ENCODE measurements at regions of chr11 and their contacts with region 1.

Region 1: DNA sequence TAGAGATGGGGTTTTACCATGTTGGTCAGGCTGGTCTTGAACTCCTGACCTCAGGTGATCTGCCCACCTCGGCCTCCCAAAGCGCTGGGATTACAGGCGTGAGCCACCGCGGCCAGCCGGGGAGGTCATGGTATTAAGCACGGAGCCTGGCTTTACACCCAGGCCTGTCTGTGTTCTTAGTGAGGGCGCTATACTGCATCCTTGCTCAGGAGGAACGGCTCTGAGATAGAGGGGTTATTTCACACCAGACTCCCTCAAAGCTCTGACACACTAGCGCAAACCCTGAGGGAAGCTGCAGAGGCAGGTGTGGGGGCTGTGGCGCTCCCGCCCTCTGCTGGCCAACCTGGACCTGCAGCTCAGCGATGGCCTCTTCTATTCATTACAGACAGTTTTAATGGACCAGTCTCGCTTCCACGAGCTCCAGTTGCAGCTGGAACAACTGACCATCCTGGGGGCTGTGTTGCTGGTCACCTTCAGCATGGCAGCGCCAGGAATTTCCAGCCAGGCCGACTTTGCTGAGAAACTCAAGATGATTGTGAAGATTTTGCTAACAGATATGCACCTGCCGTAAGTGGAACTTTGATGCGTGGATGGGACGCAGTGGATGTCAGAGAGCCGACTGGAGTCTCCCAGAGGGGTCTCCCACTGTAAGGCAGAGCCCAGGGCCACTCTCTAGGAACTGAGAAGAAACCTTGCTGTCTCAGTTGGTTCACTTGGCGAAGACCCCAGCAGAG is 26.2 kb downstream of the TCP11L1 start:
- DNase-seq: peak; percentile 64 to 77 (median 69)
- ATAC-seq: peak; percentile 98
- H3K4me3 ChIP-seq: no peak overlapping the region
- H3K27ac ChIP-seq: no peak overlapping the region
- H3K4me1 ChIP-seq: no peaks in the 10 kb centered on the region; a peak in 1 of 5 replicates
- H3K27me3 ChIP-seq: no peaks in the 10 kb centered on the region
- CTCF ChIP-seq: peak; percentile 90 to 93 (median 92)
- EP300 ChIP-seq: no peak
- POLR2A ChIP-seq: no peak
- RAD21 ChIP-seq: peak; percentile 82 to 96

Region 2: DNA sequence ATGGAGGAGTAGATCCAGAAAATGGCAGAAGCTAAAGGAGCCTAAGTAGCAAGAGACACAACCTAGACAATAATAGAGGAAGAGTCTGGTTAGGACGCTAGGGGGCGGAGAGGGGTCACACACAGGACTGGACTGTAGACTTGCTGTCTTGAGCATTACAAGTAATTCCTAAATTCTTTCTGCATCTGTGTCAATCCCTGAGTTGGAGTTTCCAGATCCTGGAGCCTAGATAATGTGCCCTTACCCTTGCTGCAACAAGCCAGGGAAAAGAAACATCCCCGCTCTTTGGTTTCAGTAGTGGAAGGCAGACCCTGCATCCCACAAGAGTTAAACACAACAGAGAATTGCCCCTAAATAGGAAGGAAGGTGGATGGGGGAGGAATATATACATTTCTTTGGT is 256.3 kb before region 1 on chr11:
- CTCF ChIA-PET with region 1: interaction called, 3 read pairs
- POLR2A ChIA-PET with region 1: no interaction called
- in situ Hi-C with region 1: no loop called
- intact Hi-C with region 1: loop called (anchors 1 kb)
- DNase-seq: peak; percentile 36 to 73 (median 50)
- ATAC-seq: peak; percentile 99
- H3K4me3 ChIP-seq: no peak overlapping the region
- H3K27ac ChIP-seq: no peak overlapping the region
- H3K4me1 ChIP-seq: no peaks in the 10 kb centered on the region
- H3K27me3 ChIP-seq: peaks cover 0 to 10% of the 10 kb centered on the region in 2 experiments; a peak in 2 of 5 replicates
- CTCF ChIP-seq: peak; percentile 74 to 81 (median 75)
- EP300 ChIP-seq: no peak
- POLR2A ChIP-seq: no peak
- RAD21 ChIP-seq: peak; percentile 39 to 78

Region 3: DNA sequence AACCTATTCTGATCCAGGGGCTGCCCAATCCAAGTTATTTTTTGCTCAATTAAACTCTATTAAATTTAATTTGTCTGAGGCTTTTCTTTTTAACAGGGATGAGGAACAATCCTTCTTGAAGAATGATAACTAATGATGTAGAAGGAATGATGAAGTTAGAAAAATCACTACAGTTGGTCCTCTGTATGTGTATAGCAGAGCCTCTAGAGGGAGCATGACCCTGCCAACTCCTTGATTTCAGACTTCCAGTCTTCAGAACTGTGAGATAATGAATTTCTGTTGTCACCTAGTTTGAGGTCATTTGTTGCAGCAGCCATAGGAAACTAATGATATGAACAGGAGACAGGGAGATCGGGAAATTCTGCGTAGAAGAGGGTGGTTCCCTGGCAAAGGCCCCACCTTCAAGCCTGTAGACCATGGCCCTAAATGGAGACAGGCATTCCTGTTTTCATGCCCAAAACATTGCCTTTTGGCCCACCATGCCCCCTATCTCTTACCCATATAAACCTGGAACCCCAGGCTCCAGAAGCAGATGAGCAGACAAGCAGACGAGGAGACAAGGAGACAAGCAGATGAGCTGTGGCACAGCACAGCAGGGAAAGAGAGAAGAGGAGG is 180.7 kb before region 1 on chr11:
- CTCF ChIA-PET with region 1: interaction called, 7 read pairs
- POLR2A ChIA-PET with region 1: no interaction called
- in situ Hi-C with region 1: no loop called
- intact Hi-C with region 1: loop called (anchors 5 kb)
- DNase-seq: peak in 3 of 4 experiments; percentile 23 to 38 (median 29)
- ATAC-seq: peak; percentile 90
- H3K4me3 ChIP-seq: no peak overlapping the region
- H3K27ac ChIP-seq: no peak overlapping the region
- H3K4me1 ChIP-seq: no peaks in the 10 kb centered on the region
- H3K27me3 ChIP-seq: peaks cover 0 to 6% of the 10 kb centered on the region in 2 experiments; a peak in 2 of 5 replicates
- CTCF ChIP-seq: peak; percentile 21 to 68 (median 56); a peak in 5 of 6 replicates
- EP300 ChIP-seq: no peak
- POLR2A ChIP-seq: no peak
- RAD21 ChIP-seq: peak in 1 of 2 experiments; percentile 60; a peak in 3 of 4 replicates

Region 4: GRCh38 chr11:32947978-32948377 is 117.6 kb before region 1 on chr11:
- CTCF ChIA-PET with region 1: no interaction called
- POLR2A ChIA-PET with region 1: no interaction called
- in situ Hi-C with region 1: no loop called
- intact Hi-C with region 1: no loop called
- DNase-seq: no peak
- ATAC-seq: no peak
- H3K4me3 ChIP-seq: no peak overlapping the region
- H3K27ac ChIP-seq: no peak overlapping the region
- H3K4me1 ChIP-seq: no peaks in the 10 kb centered on the region
- H3K27me3 ChIP-seq: no peaks in the 10 kb centered on the region
- CTCF ChIP-seq: no peak
- EP300 ChIP-seq: no peak
- POLR2A ChIP-seq: no peak
- RAD21 ChIP-seq: no peak

Region 5: GRCh38 chr11:32972781-32973180 is 92.8 kb before region 1 on chr11:
- CTCF ChIA-PET with region 1: no interaction called
- POLR2A ChIA-PET with region 1: no interaction called
- in situ Hi-C with region 1: no loop called
- intact Hi-C with region 1: no loop called
- DNase-seq: no peak
- ATAC-seq: no peak
- H3K4me3 ChIP-seq: no peak overlapping the region
- H3K27ac ChIP-seq: no peak overlapping the region
- H3K4me1 ChIP-seq: no peaks in the 10 kb centered on the region
- H3K27me3 ChIP-seq: no peaks in the 10 kb centered on the region
- CTCF ChIP-seq: no peak
- EP300 ChIP-seq: no peak
- POLR2A ChIP-seq: no peak
- RAD21 ChIP-seq: no peak

Region 6: DNA sequence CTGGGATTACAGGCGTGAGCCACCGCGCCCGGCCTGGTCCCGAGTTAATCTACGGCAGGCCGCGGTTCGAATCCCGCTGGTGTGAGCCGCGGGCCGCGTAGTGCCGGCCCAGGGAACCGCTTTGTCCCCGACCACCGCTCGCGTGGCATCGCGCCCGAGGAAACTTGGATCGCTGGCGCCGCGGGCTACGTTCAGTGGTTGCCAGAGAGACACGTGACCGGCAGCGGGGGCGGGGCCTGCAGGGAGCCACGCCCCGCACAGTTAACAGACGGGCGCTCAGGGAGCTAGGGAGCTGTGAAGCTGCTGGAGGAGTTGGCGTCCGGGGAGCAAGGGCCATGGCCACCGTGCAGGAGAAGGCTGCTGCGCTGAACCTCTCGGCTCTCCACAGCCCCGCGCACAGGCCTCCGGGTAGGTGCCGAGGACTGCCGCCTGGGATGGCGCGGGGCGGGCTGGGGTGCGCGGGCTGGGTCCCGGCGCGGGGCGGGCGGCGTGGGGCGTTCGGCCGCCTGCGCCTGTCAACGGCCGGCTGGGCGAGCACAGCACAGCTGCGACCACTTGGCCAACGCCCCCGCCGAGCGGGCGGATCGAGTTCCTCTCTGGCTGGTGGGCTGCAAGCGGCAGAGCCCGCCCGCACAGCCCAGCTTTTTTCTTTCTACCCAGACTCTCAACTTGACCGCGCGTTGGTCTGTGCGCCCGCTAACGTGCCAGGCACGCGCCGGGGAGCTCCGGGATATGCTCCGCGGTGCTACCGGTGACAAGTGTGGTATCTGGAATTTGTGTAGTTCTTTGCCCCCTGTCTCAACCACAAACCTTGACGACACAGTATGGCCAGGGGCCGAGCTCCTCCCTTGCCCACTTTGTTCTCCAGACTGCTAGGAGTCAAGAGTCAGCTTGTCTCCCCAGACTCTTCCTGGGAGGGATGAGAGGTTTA is 49.7 kb before region 1 on chr11 and contains the start of gene DEPDC7:
- CTCF ChIA-PET with region 1: no interaction called
- POLR2A ChIA-PET with region 1: no interaction called
- in situ Hi-C with region 1: no loop called
- intact Hi-C with region 1: loop called (anchors 2 kb)
- DNase-seq: peak; percentile 92 to 97 (median 92)
- ATAC-seq: peak; percentile 98
- H3K4me3 ChIP-seq: peak within 1 kb of the TSS; percentile 78
- H3K27ac ChIP-seq: peak within 1 kb of the TSS; percentile 58
- H3K4me1 ChIP-seq: peaks cover 16% of the 10 kb centered on the region in 2 experiments; a peak in 4 of 5 replicates
- H3K27me3 ChIP-seq: no peaks in the 10 kb centered on the region
- CTCF ChIP-seq: no peak
- EP300 ChIP-seq: no peak
- POLR2A ChIP-seq: peak; percentile 87
- RAD21 ChIP-seq: no peak
- polyA plus RNA-seq, gene DEPDC7: 5.4 to 8.1 TPM

Region 7: DNA sequence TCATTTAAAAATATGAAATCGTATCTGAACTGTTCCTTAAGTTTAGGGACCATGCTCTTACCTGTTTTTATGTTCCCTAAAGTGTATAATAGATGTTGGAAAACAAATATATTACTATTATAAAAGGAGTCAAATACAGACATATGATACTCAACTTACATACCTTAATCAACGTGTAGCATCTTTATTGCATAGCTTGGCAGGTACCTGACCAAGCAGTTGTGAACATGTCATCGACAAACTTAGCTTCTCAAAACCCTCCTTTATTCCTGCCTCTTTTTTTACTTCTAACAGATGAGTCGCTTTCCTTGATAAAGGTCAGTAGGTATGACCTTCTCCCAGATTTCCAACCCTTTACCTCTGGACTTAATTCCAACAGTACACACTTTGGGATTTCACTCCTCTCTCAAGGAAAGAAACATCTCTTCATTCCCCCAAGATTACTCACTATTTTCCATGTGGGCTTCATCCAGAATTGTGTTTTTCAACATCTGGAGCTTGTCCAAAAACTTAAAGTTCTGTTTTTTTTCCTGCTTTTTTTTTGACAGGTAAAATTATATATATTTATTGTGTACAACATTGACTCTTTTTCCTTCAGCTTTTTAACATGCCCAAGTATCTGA is 203.4 kb after region 1 on chr11:
- CTCF ChIA-PET with region 1: no interaction called
- POLR2A ChIA-PET with region 1: no interaction called
- in situ Hi-C with region 1: no loop called
- intact Hi-C with region 1: no loop called
- DNase-seq: no peak
- ATAC-seq: 0 out of 3 replicates have a peak, but pooled peaks have one; percentile 11
- H3K4me3 ChIP-seq: no peak overlapping the region
- H3K27ac ChIP-seq: no peak overlapping the region
- H3K4me1 ChIP-seq: peaks cover 0 to 3% of the 10 kb centered on the region in 2 experiments; a peak in 1 of 5 replicates
- H3K27me3 ChIP-seq: no peaks in the 10 kb centered on the region
- CTCF ChIP-seq: no peak
- EP300 ChIP-seq: no peak
- POLR2A ChIP-seq: no peak
- RAD21 ChIP-seq: no peak